Activated CD4-positive, alpha-beta memory T cell treated with anti-CD3 and anti-CD28 coated beads for 36 hours (primary cell): ENCODE measurements at regions of chr3 and their contacts with region 1.

Region 1: GRCh38 chr3:120095226-120095978 is 1.2 kb upstream of the GSK3B start:
- DNase-seq: peak; percentile 94
- H3K4me3 Mint-ChIP-seq: no peak overlapping the region
- H3K27ac Mint-ChIP-seq: no peak overlapping the region
- H3K4me1 Mint-ChIP-seq: peaks cover 18% of the 10 kb centered on the region
- H3K27me3 Mint-ChIP-seq: no peaks in the 10 kb centered on the region

Region 2: DNA sequence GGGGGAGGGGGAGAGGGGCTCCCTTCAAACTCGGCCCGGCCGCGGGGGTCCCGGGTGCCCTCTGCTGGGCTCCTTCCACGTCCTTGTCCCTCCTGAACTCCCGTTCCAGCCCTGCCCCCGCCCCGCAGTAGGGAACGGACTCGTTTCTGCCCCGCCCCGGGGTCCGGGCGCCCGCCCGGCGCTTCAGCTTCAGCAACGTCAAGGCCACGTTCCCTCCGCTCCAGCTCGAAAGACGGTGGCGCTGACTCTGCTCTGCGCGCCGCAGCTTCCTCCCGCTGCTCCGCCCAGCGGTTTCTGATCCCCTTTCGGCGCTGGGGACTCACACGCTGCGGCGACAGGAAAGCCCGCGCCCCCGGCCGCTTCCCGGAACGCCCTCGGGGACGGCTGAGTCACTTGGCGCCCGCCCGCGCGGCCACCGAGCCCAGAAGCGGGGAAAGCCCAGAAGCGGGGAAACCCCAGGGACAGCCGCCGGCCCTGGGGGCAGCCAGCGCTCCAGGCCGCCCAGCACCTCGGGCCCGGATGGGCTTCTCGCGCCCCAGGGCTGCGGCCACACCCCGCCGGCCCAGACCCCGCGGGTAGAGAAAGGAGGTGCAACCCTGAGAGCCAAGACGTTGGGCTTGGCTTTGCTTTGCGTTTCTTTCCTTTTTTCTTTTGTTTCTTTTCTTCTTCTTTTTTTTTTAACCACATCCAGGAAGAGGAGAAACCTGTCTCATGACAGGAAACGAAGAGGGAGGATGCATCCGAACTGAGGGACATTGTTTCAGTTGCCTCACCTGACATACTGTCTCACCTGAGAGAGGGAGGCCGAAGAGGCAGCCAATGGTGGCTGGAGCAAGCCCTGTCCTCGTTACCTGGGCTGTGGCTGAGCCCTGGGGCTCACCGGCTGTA is 772.3 kb before region 1 on chr3:
- CTCF ChIA-PET with region 1: no interaction called
- POLR2A ChIA-PET with region 1: no interaction called
- intact Hi-C with region 1: loop called (anchors 2 kb)
- DNase-seq: peak; percentile 97
- H3K4me3 Mint-ChIP-seq: peak overlapping the region; percentile 82
- H3K27ac Mint-ChIP-seq: peak overlapping the region; percentile 95
- H3K4me1 Mint-ChIP-seq: peaks cover 41% of the 10 kb centered on the region
- H3K27me3 Mint-ChIP-seq: no peaks in the 10 kb centered on the region

Region 3: GRCh38 chr3:119637679-119638525 is 457.5 kb before region 1 on chr3:
- CTCF ChIA-PET with region 1: no interaction called
- POLR2A ChIA-PET with region 1: no interaction called
- intact Hi-C with region 1: loop called (anchors 1 kb)
- DNase-seq: no peak
- H3K4me3 Mint-ChIP-seq: no peak overlapping the region
- H3K27ac Mint-ChIP-seq: peak overlapping the region; percentile 92
- H3K4me1 Mint-ChIP-seq: peaks cover 45% of the 10 kb centered on the region
- H3K27me3 Mint-ChIP-seq: no peaks in the 10 kb centered on the region

Region 4: DNA sequence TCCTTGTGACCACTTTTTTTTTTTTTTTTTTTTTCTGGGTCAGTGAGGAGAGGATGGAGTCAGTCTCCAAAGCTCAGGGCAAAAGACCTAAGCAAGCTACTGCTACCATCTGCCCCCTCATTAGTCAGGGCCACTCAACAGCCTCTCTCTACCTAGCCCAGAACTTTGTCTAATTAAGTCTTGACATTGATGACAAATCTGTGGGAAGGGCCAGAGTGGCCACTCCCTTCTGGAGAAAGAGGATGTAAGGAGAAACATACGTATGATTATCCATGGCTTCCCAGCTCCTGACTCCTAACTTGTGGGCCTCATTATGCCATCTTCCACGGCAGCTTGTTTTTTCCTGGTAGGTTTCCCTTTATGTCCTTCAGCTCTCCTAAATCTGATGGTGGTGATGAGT is 275.6 kb before region 1 on chr3:
- CTCF ChIA-PET with region 1: no interaction called
- POLR2A ChIA-PET with region 1: no interaction called
- intact Hi-C with region 1: loop called (anchors 5 kb)
- DNase-seq: no peak
- H3K4me3 Mint-ChIP-seq: no peak overlapping the region
- H3K27ac Mint-ChIP-seq: no peak overlapping the region
- H3K4me1 Mint-ChIP-seq: peaks cover 2% of the 10 kb centered on the region
- H3K27me3 Mint-ChIP-seq: no peaks in the 10 kb centered on the region

Region 5: DNA sequence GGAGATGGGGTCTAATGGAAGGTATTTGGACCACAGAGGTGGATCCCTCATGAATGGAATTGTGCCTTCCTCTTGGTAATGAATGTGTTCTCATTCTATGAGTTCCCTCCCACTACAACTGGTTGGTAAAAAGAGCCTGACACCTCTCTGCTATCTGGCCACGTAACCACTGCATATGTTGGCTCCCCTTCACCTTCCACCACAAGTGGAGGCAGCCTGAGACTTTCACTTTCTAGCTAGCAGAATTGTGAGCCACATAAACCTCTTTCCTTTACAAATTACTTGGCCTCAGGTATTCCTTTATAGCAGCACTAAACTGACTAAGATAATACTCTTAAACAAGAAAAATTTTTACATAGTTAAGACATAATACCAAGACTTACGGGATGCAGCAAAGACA is 158.2 kb before region 1 on chr3:
- CTCF ChIA-PET with region 1: interaction called, 3 read pairs
- POLR2A ChIA-PET with region 1: interaction called, 3 read pairs
- intact Hi-C with region 1: loop called (anchors 1 kb)
- DNase-seq: peak; percentile 72
- H3K4me3 Mint-ChIP-seq: no peak overlapping the region
- H3K27ac Mint-ChIP-seq: peak overlapping the region; percentile 44
- H3K4me1 Mint-ChIP-seq: peaks cover 34% of the 10 kb centered on the region
- H3K27me3 Mint-ChIP-seq: no peaks in the 10 kb centered on the region

Region 6: DNA sequence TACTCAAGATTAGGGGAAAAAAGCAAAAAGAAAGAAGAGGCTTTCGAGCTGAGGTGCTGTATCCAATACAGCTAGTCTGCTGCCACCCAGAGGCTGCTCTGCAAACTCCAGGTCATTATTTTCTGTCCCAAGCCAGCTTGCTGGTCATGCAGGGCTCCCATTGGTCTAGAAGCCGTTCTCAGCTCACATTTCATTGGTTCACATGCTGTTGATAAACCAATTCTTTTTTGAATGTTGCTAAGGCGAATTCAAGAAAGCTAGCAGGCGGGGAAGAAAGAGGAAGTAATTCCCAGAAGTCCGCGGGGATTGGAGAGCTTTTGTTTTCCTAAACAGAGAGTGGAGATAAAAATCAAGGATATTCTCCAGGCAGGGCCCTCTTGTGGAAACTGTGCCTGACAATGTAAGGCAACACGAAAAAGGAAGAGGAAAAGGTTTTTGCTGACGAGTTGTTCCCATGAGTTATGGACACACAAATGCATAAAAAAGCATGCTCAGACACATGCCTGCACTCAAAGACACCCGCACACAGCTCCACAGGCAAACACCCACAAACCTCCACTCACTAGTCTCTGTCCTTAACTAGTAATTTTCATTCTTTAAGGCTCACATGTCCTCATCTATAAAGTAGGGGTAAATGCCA is 322.0 kb after region 1 on chr3:
- CTCF ChIA-PET with region 1: interaction called, 4 read pairs
- POLR2A ChIA-PET with region 1: interaction called, 4 read pairs
- intact Hi-C with region 1: loop called (anchors 5 kb)
- DNase-seq: peak; percentile 93
- H3K4me3 Mint-ChIP-seq: peak overlapping the region; percentile 74
- H3K27ac Mint-ChIP-seq: no peak overlapping the region
- H3K4me1 Mint-ChIP-seq: peaks cover 12% of the 10 kb centered on the region
- H3K27me3 Mint-ChIP-seq: no peaks in the 10 kb centered on the region

Region 7: GRCh38 chr3:120801484-120801883 is 706.1 kb after region 1 on chr3:
- CTCF ChIA-PET with region 1: no interaction called
- POLR2A ChIA-PET with region 1: no interaction called
- intact Hi-C with region 1: no loop called
- DNase-seq: no peak
- H3K4me3 Mint-ChIP-seq: no peak overlapping the region
- H3K27ac Mint-ChIP-seq: no peak overlapping the region
- H3K4me1 Mint-ChIP-seq: no peaks in the 10 kb centered on the region
- H3K27me3 Mint-ChIP-seq: peaks cover 4% of the 10 kb centered on the region

Region 8: GRCh38 chr3:121660356-121661171 is 1565.2 kb after region 1 on chr3 and contains the start of gene HCLS1:
- CTCF ChIA-PET with region 1: no interaction called
- POLR2A ChIA-PET with region 1: no interaction called
- intact Hi-C with region 1: loop called (anchors 2 kb)
- DNase-seq: peak; percentile 83
- H3K4me3 Mint-ChIP-seq: peak within 1 kb of the TSS; percentile 97
- H3K27ac Mint-ChIP-seq: peak within 1 kb of the TSS; percentile 100
- H3K4me1 Mint-ChIP-seq: peaks cover 47% of the 10 kb centered on the region
- H3K27me3 Mint-ChIP-seq: no peaks in the 10 kb centered on the region
- total RNA-seq, gene HCLS1: 249 to 251 TPM